Activated CD8-positive, alpha-beta T cell treated with anti-CD3 and anti-CD28 coated beads for 36 hours (primary cell): ENCODE measurements at regions of chr12 and their contacts with region 1.

Region 1: DNA sequence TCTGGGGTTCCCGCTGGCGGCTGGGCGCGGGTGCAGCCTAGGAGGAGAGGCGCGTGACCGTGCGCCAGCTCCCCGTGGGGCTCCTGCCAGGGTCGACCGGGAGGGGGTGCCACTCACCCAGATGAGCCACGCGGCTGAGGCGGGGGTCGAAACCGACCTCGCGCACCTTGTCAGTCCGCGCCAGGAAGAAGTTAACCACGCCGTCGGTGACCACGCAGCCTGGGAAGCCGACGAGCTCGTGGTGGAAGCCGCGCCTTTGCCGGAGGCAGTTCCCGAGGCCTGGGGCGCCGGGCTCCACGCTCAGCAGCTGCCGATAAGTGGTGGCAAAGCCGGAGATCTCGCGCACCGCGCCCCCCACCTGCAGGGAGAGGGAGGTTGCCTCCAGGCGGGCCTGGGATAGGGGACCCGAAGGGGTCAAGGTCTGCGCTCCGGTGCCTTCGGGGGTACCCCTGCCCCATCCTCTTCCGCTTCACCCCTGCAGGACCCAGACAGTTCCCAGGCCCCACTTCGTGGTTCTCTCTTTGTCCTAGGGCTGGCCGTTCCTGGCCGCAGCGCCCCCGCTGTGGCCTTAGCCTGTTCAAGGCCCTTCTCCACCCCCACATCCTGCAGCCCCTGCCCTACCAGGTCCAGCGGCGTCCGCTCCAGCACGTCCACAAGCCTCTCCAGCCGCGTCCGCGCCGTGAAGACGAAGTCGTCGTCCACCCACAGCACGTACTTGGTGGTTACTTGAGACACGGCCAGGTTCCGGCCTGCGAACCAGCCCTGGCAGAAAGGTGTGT is 5.3 kb downstream of the B4GALNT1 start:
- DNase-seq: peak; percentile 59
- ATAC-seq: peak; percentile 65
- H3K4me3 Mint-ChIP-seq: peak overlapping the region; percentile 19
- H3K27ac Mint-ChIP-seq: no peak overlapping the region
- H3K4me1 Mint-ChIP-seq: peaks cover 12% of the 10 kb centered on the region
- H3K27me3 Mint-ChIP-seq: peaks cover 88% of the 10 kb centered on the region
- CTCF ChIP-seq: peak; percentile 51

Region 2: GRCh38 chr12:57693659-57694458 is 66.2 kb after region 1 on chr12 and contains the start of gene OS9:
- CTCF ChIA-PET with region 1: interaction called, 6 read pairs
- POLR2A ChIA-PET with region 1: no interaction called
- intact Hi-C with region 1: loop called (anchors 5 kb)
- DNase-seq: peak; percentile 99
- ATAC-seq: peak; percentile 96
- H3K4me3 Mint-ChIP-seq: no peak within 1 kb of the TSS
- H3K27ac Mint-ChIP-seq: no peak within 1 kb of the TSS
- H3K4me1 Mint-ChIP-seq: no peaks in the 10 kb centered on the region
- H3K27me3 Mint-ChIP-seq: peaks cover under 1% of the 10 kb centered on the region
- CTCF ChIP-seq: peak; percentile 83
- total RNA-seq, gene OS9: 53.0 to 56.3 TPM

Region 3: DNA sequence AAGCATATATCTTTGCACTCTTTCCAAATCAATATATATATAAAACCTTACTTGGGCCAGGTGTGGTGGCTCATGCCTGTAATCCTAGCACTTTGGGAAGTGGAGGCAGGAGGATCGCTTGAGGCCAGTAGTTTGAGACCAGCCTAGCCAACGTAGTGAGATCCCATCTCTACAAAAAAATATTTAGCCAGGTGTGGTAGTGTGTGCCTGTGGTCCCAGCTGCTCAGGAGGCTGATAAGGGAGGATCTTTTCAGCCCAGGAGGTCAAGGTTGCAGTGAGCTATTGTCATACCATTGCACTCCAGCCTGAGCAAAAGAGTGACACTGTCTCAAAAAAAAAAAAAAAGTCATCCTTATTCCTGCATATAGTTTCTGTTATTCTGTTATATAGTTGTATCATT is 80.6 kb after region 1 on chr12:
- CTCF ChIA-PET with region 1: no interaction called
- POLR2A ChIA-PET with region 1: no interaction called
- intact Hi-C with region 1: no loop called
- DNase-seq: no peak
- ATAC-seq: no peak
- H3K4me3 Mint-ChIP-seq: no peak overlapping the region
- H3K27ac Mint-ChIP-seq: no peak overlapping the region
- H3K4me1 Mint-ChIP-seq: peaks cover 6% of the 10 kb centered on the region
- H3K27me3 Mint-ChIP-seq: no peaks in the 10 kb centered on the region
- CTCF ChIP-seq: no peak